Transverse colon (tissue), 4 donors: ENCODE measurements at regions of chr1 and their contacts with region 1.

Region 1: DNA sequence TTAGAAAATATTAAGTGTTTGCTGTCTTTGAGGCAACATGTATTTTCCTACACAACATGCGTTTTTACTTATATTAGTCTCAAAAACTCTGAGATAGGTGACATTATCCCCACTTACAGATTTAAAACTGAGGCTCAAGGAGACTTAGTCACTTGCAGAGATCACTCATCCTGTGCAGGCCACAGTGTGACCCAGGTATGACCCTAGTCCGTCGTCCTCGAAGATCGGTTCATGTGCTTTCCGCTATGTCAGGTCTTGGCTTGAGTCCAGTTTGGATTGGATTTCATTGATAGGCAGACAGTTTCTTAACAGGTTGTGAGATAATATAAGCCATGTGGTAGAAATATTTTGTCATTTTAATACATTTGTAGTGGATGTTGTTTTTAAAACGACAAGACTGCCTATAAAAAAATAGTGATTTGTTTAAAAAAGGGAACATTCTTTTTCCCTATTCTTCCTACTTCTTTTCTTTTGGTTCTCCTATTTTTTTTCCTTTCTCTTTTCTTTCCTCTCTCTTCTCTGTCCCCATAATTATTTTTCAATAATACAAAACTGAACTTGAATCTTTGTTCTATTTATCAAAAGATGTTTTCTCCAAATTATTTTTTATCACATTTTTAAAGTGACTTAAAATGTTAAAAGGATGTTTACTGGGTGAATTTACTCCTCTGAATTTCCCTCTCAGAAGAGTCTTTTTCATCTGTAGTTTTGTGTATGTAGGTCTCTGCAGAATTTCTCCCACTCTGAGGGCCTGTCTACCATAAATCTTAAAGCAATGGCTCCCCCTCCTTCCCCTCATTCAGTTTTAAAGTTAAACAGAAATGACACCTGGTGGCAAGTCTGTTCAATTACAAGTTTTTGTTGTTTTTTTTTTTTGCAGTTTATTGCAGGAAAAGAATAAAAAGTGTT is 81.8 kb downstream of the PHTF1 start:
- DNase-seq: no peak
- H3K4me3 ChIP-seq: no peak overlapping the region
- H3K27ac ChIP-seq: no peak overlapping the region
- H3K4me1 ChIP-seq: peaks cover 0 to 9% (median 0%) of the 10 kb centered on the region in 4 donors
- H3K27me3 ChIP-seq: no peaks in the 10 kb centered on the region
- CTCF ChIP-seq: peak; percentile 56 to 62 (median 57)
- EP300 ChIP-seq: no peak
- POLR2A ChIP-seq: no peak

Region 2: DNA sequence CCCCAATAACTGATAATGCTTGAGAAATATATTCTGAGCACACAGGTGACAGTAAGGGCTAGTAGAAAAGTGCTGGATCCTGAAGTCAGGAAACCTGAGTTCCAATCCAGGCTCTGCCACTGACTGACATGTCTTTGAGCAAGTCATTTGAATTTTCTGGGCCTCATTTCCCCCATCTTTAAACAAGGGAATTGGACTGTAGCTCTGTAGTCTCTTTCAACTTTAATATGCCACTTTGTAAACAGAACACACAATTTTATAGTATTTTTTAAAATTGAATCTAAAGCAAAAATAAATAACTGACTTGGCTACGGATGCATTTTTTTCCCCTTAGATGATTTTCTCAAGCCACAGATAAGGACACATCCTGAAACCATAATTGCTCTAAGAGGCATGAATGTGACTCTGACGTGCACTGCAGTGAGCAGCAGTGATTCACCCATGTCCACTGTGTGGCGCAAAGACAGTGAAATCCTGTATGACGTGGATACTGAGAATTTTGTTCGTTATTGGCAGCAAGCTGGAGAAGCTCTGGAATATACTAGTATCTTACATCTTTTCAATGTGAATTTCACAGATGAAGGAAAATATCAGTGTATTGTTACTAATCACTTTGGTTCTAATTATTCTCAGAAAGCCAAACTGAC is 567.5 kb before region 1 on chr1:
- in situ Hi-C with region 1: loop called in 1 of 4 experiments (anchors 25 kb)
- intact Hi-C with region 1: no loop called
- DNase-seq: no peak
- H3K4me3 ChIP-seq: no peak overlapping the region
- H3K27ac ChIP-seq: peak overlapping the region; percentile 11 to 28 (median 21)
- H3K4me1 ChIP-seq: no peaks in the 10 kb centered on the region
- H3K27me3 ChIP-seq: no peaks in the 10 kb centered on the region
- CTCF ChIP-seq: no peak
- EP300 ChIP-seq: no peak
- POLR2A ChIP-seq: no peak

Region 3: DNA sequence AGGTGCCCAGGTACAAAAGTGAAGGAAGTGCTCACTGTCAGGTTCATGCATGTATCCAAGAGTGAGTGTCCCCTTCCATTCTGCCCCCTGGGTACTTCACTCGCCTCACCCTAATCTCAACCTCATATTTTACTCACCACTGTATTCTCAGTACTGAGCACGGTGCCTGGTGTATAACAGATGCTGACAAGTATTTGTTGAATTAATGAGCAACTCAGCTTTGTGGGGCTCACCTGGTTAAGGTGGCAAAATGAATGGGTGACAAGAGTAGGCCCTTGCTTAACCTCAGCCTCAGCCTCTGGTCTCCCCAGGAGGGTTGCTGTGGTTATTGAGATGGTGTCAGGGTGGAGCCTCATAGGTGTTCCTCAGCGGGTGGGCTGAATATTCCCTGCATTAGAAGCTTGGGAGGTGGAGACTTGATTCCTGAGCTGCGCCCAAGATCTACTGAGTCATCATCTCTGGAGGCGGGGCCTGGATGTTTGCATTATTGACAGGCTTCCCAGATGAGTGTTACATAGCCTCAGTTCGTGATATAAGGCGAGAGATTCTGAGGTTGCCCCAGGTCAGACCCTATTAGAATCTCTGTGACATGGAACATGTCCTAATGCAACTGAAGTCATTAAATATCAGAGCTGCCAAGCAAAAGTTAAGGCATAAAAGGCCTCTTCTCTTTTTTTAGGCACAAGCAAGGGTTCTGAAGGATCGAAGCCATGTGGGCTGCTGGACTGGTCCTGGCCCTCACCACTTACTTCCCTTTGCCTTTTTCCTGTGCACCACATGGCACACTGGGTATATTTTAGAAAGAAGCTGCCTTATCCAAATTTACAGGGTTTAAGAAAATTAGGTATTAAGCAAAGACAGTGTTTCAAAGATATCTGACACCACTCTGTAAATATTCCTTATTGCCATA is 436.9 kb after region 1 on chr1:
- in situ Hi-C with region 1: no loop called
- intact Hi-C with region 1: no loop called
- DNase-seq: no peak
- H3K4me3 ChIP-seq: no peak overlapping the region
- H3K27ac ChIP-seq: no peak overlapping the region
- H3K4me1 ChIP-seq: no peaks in the 10 kb centered on the region
- H3K27me3 ChIP-seq: no peaks in the 10 kb centered on the region
- CTCF ChIP-seq: no peak
- EP300 ChIP-seq: no peak
- POLR2A ChIP-seq: no peak